Psoas muscle (tissue), 8 donors: ENCODE measurements at regions of chr9 and their contacts with region 1.

Region 1: DNA sequence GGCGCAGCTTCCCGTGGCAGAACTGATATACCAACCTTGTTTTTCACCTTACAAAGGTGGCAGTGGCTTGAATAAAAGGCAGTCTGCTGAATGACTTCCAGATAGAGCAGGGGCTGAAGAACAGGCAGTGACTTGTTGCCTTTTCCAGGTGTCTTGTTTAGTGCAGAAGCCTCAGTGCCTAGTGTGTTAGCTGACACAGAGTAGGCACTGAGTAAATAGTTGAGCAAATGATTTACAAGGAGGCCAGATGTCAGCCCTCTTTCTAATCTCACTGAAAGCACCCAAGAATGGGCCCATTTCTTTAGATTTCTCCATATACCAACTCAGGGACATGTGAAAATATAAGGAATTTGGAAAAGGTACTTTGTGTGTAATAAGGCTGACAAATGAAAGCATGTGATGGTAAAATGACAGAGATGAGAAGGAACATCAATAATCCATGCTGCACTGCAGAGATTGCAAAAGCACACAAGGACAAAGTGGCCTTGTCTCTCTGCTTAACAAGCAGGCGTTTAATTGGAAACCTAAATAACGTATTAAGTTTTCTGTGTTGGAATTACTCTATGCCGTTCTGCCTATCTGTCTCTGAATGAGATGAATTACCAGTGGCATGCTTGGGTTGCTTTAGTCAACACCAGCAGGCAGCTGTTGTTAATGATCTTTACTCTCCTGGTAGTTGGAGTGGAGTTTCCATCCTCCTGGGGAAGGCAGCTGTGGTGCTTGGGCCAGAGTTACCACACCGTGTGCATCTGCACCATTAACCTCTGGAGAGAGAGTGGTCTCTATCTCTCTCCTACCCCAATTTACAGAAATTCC is 360.1 kb upstream of the C9orf72 start:
- DNase-seq: no peak
- ATAC-seq: no peak
- H3K4me3 ChIP-seq: no peak overlapping the region
- H3K27ac ChIP-seq: no peak overlapping the region
- H3K4me1 ChIP-seq: no peaks in the 10 kb centered on the region
- H3K27me3 ChIP-seq: no peaks in the 10 kb centered on the region
- CTCF ChIP-seq: no peak

Region 2: GRCh38 chr9:27990524-27990923 is 57.1 kb after region 1 on chr9:
- intact Hi-C with region 1: loop called in 1 of 2 experiments (anchors 10 kb)
- DNase-seq: no peak
- ATAC-seq: no peak
- H3K4me3 ChIP-seq: no peak overlapping the region
- H3K27ac ChIP-seq: no peak overlapping the region
- H3K4me1 ChIP-seq: no peaks in the 10 kb centered on the region
- H3K27me3 ChIP-seq: no peaks in the 10 kb centered on the region
- CTCF ChIP-seq: no peak